G401 (cell line): ENCODE measurements at regions of chr11 and their contacts with region 1.

Region 1: DNA sequence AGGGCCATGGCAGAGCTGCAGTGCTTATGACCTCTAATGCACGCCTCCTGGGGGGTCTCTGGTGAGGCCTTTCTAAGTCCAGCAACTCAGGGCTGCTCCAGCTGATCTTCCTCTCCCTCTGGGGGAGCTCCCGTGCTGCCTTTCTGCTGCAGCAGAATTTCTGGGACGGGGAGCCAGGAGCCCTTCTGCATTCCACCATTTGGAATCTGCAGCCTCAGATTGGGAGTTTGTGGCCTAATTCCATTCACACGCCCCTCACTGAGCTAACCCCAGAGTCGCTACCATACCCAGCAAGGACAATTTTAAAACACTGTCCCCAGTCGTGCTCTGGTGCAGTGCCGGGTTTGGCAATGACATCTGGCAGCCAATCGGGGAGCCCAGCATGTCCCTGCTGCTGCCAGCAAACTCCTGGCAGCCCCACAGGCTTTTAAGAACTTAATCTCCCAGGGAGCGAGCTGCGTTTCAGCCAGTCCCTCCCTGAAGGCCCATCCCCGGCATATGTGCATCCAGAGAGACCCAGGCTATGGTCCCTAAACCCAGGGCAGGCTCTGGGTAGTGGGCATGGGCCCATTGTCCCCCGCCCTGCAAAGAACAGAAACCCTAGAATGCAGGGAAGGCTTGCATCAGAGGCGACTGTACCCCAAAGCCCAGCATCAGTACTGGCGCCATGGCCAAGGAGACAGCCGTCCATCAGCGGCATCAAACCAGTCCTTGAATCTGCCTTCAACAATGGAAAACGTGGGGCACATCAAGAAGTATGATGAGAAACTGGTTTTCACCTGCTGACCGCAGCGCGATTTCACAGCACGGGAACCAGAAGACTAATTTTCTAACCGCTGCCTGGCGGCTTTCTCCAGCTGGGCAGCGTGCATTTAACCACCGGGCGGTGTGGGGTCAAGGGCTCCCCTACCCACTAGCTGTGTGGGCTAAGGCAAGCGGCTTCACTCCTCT is 4.6 kb downstream of the SHANK2 start:
- DNase-seq: peak; percentile 34

Region 2: GRCh38 chr11:71152991-71153390 is 94.8 kb before region 1 on chr11:
- in situ Hi-C with region 1: no loop called
- DNase-seq: no peak

Region 3: DNA sequence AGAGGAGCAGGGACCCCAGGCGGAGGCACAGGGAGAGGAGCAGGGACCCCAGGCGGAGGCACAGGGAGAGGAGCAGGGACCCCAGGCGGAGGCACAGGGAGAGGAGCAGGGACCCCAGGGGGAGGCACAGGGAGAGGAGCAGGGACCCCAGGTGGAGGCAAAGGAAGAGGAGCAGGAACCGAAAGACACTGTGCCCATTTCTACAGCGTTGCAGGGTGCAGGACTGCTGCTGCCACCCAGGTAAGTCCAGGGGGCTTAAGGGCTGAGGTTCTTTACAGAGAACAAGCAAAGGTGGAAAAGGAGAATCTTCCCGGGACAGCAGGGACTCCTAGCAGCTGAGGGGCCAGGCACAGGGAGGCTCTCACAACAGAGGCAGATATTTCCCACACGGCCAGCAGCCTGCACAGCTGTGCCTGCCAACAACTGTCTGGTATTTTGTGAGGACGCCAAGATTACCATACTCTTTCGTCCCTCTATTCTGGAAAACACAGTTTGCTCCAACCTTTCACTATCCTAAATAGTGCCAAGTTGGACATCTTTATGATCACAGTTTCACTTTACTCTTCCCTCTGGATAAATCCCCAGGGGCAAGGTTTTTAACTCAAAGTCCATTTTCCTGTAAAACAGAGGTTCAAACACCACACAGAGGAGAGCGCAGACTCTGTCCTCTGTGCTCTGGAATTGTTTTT is 34.8 kb before region 1 on chr11:
- in situ Hi-C with region 1: loop called (anchors 5 kb)
- DNase-seq: no peak

Region 4: DNA sequence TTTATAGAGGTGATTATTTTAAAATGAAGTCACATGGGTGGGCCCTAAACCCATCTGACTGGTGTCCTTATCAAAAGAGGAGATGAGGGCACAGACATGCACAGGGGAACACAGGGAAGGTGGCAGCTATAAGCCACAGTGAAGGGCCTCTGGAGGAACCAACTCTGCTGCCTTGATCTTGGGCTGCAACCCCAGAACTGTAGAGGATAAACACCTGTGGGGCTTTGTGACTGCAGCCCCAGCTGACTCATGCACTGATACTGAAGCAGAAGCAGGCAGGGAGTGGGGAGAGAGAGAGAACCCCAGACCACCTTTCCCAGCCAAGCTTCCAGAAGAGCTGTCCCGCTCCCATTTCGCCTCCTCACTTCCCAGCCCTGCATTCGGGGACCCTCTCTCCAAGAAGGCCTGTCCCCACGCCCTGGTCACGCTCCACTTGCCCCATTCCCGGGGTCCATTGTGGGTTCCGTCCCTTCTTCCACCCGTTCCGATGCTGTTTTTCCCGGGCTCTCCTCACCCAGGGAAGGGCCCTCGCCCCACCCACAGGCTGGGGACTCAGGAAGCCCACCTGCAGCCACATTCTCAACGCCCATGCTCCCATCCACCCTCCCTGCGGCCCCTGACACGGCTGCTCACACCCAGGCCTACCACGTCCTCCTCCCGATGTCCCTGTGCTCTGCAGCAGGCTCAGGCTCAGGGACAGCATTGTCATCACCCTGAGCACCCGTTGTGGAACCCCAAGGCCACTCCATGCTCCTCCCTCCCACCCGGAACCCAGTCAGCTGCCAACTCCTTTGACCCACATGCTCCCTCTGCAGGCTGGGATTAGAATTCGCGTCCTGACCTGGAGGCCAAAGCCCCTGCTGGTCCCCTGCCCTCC is 95.4 kb after region 1 on chr11:
- in situ Hi-C with region 1: no loop called
- DNase-seq: no peak